ENCODE measurements at regions of chr2 and their contacts with region 1.

Region 1: GRCh38 chr2:45993476-45993991 is 303.7 kb upstream of the EPAS1 start:
- DNase-seq: peak; percentile 58
- H3K4me3 ChIP-seq: no peak overlapping the region
- H3K27ac ChIP-seq: no peak overlapping the region
- H3K4me1 ChIP-seq: peaks cover 19% of the 10 kb centered on the region
- H3K27me3 ChIP-seq: no peaks in the 10 kb centered on the region
- CTCF ChIP-seq: peak; percentile 78 to 79

Region 2: DNA sequence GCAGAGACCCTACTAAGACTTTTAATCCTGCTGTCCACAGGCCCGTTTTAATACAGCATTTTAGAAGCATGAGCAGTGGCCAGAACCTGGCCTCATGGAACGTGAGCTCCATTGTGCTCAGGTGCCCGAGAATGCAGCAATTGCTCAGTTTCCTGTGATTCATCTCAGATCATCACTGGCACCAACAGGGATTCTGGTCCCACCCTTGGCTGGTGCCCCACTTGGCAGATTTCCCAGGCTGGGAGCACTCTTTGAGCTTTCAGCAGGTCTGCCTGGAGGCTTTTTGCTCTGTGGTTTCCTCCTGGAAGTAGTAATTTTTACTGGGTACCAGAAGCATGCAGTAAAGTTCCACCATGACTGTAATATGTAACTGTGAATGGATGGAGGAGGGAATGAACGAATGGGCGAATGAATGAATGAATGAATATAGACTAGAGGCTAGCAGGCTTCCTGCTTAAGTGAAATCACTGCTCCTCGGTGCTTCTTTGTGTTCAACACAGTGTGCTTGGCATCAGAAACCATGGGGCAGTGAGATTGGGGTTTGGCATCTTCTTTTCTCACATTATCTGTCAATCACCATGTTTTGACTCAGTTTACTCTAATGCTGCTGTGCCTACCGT is 29.2 kb before region 1 on chr2:
- CTCF ChIA-PET with region 1: interaction called, 3 read pairs
- dilution Hi-C with region 1: no loop called
- in situ Hi-C with region 1: no loop called
- intact Hi-C with region 1: loop called (anchors 1 kb)
- DNase-seq: peak; percentile 99
- H3K4me3 ChIP-seq: no peak overlapping the region
- H3K27ac ChIP-seq: peak overlapping the region; percentile 64
- H3K4me1 ChIP-seq: peaks cover 29% of the 10 kb centered on the region
- H3K27me3 ChIP-seq: no peaks in the 10 kb centered on the region
- CTCF ChIP-seq: peak in 1 of 2 donors; percentile 3

Region 3: GRCh38 chr2:46010925-46011490 is 17.5 kb after region 1 on chr2:
- CTCF ChIA-PET with region 1: interaction called, 4 read pairs
- dilution Hi-C with region 1: no loop called
- in situ Hi-C with region 1: no loop called
- intact Hi-C with region 1: loop called (anchors 1 kb)
- DNase-seq: peak; percentile 37
- H3K4me3 ChIP-seq: no peak overlapping the region
- H3K27ac ChIP-seq: no peak overlapping the region
- H3K4me1 ChIP-seq: peaks cover 36% of the 10 kb centered on the region
- H3K27me3 ChIP-seq: no peaks in the 10 kb centered on the region
- CTCF ChIP-seq: peak; percentile 62 to 69

Region 4: DNA sequence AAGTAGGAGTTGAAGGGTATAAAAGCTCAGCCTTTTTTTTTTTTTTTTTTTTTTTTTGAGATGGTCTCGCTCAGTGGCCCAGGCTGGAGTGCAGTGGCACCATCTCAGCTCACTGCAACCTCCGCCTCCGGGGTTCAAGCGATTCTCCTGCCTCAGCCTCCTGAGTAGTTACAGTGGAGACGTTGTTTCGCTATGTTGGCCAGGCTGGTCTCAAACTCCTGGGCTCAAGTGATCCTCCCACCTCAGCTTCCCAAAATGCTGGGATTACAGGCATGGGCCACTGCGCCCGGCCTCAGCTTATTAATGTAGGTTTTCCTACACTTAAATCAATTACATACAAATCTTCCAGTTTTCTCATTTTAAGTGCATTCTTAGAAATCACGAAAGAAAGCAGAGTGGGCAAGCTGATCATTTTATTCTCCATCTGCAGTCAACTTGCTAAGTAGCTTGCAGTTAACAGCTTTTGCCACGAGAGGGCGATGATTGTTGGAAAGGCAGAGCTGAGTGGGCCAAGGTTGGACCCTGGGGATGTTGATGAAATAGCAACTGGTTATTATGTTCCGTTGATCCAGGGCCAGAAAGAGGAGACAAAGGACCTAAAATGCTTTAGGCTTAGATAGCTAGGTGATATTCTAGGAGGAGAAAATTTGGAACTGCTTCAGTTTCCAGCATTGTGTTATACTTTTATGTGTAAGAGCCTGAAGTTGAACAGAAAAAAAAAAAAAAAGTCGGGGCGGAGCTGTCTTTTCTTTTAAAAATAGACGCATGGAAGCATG is 69.3 kb after region 1 on chr2:
- CTCF ChIA-PET with region 1: interaction called, 3 read pairs
- dilution Hi-C with region 1: no loop called
- in situ Hi-C with region 1: no loop called
- intact Hi-C with region 1: loop called (anchors 1 kb)
- DNase-seq: peak; percentile 53
- H3K4me3 ChIP-seq: no peak overlapping the region
- H3K27ac ChIP-seq: no peak overlapping the region
- H3K4me1 ChIP-seq: peaks cover 4% of the 10 kb centered on the region
- H3K27me3 ChIP-seq: no peaks in the 10 kb centered on the region
- CTCF ChIP-seq: peak; percentile 85 to 92